Natural killer cell (primary cell): ENCODE measurements at regions of chr2 and their contacts with region 1.

Region 1: DNA sequence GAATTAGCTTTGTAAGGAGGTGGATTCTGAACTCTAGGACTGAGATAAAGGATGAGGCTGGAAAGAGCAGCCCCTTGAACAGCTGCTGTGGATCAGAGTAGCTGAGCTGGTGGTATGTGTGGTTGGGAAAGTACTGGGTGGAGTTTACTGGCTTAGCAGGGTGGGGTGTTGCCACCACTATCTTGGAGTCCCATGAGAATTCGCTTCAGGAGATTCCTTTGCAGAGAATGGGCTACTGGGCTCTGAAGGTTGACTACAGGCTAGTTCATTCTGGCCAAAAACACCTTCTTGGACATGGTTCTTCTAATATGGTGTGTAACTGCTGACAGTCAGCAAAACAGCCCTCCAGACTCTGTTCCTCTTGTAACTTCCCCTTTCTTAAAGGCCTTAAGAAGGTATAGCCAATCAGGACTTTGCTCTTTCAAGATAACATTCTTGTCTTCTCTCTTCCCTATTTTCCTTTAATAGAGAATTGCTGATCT is 52.7 kb downstream of the TET3 start:
- DNase-seq: peak in 1 of 2 donors; percentile 36
- ATAC-seq: peak; percentile 22 to 74 (median 46)
- H3K4me3 ChIP-seq: no peak overlapping the region
- H3K4me3 Mint-ChIP-seq: peak overlapping the region; percentile 69
- H3K27ac ChIP-seq: peak overlapping the region; percentile 17
- H3K27ac Mint-ChIP-seq: peak overlapping the region; percentile 66 to 70
- H3K4me1 ChIP-seq: peaks cover 64% of the 10 kb centered on the region
- H3K4me1 Mint-ChIP-seq: peaks cover 88 to 92% of the 10 kb centered on the region in 2 donors
- H3K27me3 ChIP-seq: no peaks in the 10 kb centered on the region
- H3K27me3 Mint-ChIP-seq: no peaks in the 10 kb centered on the region
- CTCF ChIP-seq: no peak

Region 2: GRCh38 chr2:73926493-73927338 is 110.7 kb before region 1 on chr2 and contains the start of gene DGUOK:
- intact Hi-C with region 1: loop called (anchors 2 kb)
- DNase-seq: peak; percentile 95 to 100
- ATAC-seq: peak; percentile 97 to 100 (median 98)
- H3K4me3 ChIP-seq: peak within 1 kb of the TSS; percentile 88
- H3K4me3 Mint-ChIP-seq: peak within 1 kb of the TSS; percentile 80
- H3K27ac ChIP-seq: peak within 1 kb of the TSS; percentile 99
- H3K27ac Mint-ChIP-seq: peak within 1 kb of the TSS; percentile 95 to 96
- H3K4me1 ChIP-seq: peaks cover 20% of the 10 kb centered on the region
- H3K4me1 Mint-ChIP-seq: peaks cover 34 to 43% of the 10 kb centered on the region in 2 donors
- H3K27me3 ChIP-seq: no peaks in the 10 kb centered on the region
- H3K27me3 Mint-ChIP-seq: no peaks in the 10 kb centered on the region
- CTCF ChIP-seq: no peak
- total RNA-seq, gene DGUOK: 47.6 to 56.8 (median 54.8) TPM

Region 3: GRCh38 chr2:73985308-73986084 is 51.9 kb before region 1 on chr2:
- intact Hi-C with region 1: loop called (anchors 2 kb)
- DNase-seq: peak; percentile 54 to 79
- ATAC-seq: peak; percentile 52 to 60 (median 54)
- H3K4me3 ChIP-seq: peak overlapping the region; percentile 63
- H3K4me3 Mint-ChIP-seq: peak overlapping the region; percentile 89
- H3K27ac ChIP-seq: peak overlapping the region; percentile 69
- H3K27ac Mint-ChIP-seq: peak overlapping the region; percentile 34 to 84
- H3K4me1 ChIP-seq: peaks cover 58% of the 10 kb centered on the region
- H3K4me1 Mint-ChIP-seq: peaks cover 62 to 71% of the 10 kb centered on the region in 2 donors
- H3K27me3 ChIP-seq: peaks cover 1% of the 10 kb centered on the region
- H3K27me3 Mint-ChIP-seq: peaks cover 19 to 20% of the 10 kb centered on the region in 2 donors
- CTCF ChIP-seq: no peak

Region 4: GRCh38 chr2:74025971-74026612 is 11.3 kb before region 1 on chr2:
- intact Hi-C with region 1: loop called (anchors 1 kb)
- DNase-seq: peak; percentile 39 to 59
- ATAC-seq: peak; percentile 86 to 95 (median 90)
- H3K4me3 ChIP-seq: no peak overlapping the region
- H3K4me3 Mint-ChIP-seq: peak overlapping the region; percentile 83
- H3K27ac ChIP-seq: peak overlapping the region; percentile 66
- H3K27ac Mint-ChIP-seq: peak overlapping the region; percentile 93 to 95
- H3K4me1 ChIP-seq: peaks cover 48% of the 10 kb centered on the region
- H3K4me1 Mint-ChIP-seq: peaks cover 49 to 64% of the 10 kb centered on the region in 2 donors
- H3K27me3 ChIP-seq: no peaks in the 10 kb centered on the region
- H3K27me3 Mint-ChIP-seq: no peaks in the 10 kb centered on the region
- CTCF ChIP-seq: no peak

Region 5: DNA sequence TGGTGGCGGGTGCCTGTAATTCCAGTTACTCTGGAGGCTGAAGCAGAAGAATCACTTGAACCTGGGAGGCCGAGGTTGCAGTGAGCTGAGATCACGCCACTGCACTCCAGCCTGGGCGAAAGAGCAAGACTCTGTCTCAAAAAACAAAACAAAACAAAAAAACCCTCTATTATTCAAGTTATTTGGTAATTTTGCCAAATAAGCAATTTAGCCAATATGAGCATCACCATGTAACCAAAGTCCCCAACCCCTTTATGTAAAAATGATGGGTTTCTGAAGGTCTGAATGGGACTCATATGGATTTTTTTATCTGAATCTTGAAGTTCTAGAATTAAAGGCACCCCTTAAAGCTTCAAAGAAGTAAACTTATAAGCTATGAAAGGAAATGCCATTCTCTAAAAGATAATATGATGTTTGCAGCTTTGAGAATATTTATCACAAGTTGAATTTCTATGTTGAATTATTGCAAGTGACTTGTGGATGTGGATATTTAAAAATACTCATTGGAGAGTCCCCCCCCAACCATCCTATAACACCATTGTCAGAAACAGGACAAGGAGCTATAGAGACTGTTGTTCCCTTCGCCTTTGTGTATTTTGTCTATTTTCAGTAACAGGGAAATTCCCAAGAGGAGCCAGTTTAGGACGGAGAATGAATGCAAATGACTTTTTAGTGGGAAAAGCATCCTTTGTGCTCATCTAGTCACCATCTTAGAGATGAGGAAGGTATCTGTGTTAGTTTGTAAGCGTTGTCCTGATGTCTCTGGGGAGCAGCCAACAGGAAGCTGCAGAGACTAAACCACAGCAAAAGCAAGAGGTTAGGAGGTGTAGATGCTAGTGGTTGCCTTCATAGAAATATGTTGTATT is 15.5 kb after region 1 on chr2:
- intact Hi-C with region 1: loop called (anchors 1 kb)
- DNase-seq: peak in 1 of 2 donors; percentile 67
- ATAC-seq: peak; percentile 80 to 95 (median 93)
- H3K4me3 ChIP-seq: no peak overlapping the region
- H3K4me3 Mint-ChIP-seq: peak overlapping the region; percentile 82
- H3K27ac ChIP-seq: peak overlapping the region; percentile 28
- H3K27ac Mint-ChIP-seq: peak overlapping the region; percentile 54 to 83
- H3K4me1 ChIP-seq: peaks cover 16% of the 10 kb centered on the region
- H3K4me1 Mint-ChIP-seq: peaks cover 44 to 57% of the 10 kb centered on the region in 2 donors
- H3K27me3 ChIP-seq: no peaks in the 10 kb centered on the region
- H3K27me3 Mint-ChIP-seq: no peaks in the 10 kb centered on the region
- CTCF ChIP-seq: no peak

Region 6: GRCh38 chr2:74304332-74305148 is 267.1 kb after region 1 on chr2:
- intact Hi-C with region 1: no loop called
- DNase-seq: no peak
- ATAC-seq: peak in 1 of 3 donors; percentile 66
- H3K4me3 ChIP-seq: no peak overlapping the region
- H3K4me3 Mint-ChIP-seq: no peak overlapping the region
- H3K27ac ChIP-seq: no peak overlapping the region
- H3K27ac Mint-ChIP-seq: no peak overlapping the region
- H3K4me1 ChIP-seq: no peaks in the 10 kb centered on the region
- H3K4me1 Mint-ChIP-seq: no peaks in the 10 kb centered on the region
- H3K27me3 ChIP-seq: no peaks in the 10 kb centered on the region
- H3K27me3 Mint-ChIP-seq: peaks cover 0 to 3% of the 10 kb centered on the region in 2 donors
- CTCF ChIP-seq: no peak